MCF 10A (cell line): ENCODE measurements at regions of chr9 and their contacts with region 1.

Region 1: GRCh38 chr9:133103183-133103986 is 17.7 kb downstream of the RALGDS start:
- DNase-seq: peak; percentile 58
- H3K4me3 Mint-ChIP-seq: no peak overlapping the region
- H3K27ac Mint-ChIP-seq: peak overlapping the region; percentile 75
- H3K4me1 Mint-ChIP-seq: no peaks in the 10 kb centered on the region
- H3K27me3 Mint-ChIP-seq: no peaks in the 10 kb centered on the region
- CTCF ChIP-seq: peak; percentile 95

Region 2: GRCh38 chr9:132997591-132997990 is 105.8 kb before region 1 on chr9:
- CTCF ChIA-PET with region 1: no interaction called
- POLR2A ChIA-PET with region 1: no interaction called
- intact Hi-C with region 1: no loop called
- DNase-seq: no peak
- H3K4me3 Mint-ChIP-seq: no peak overlapping the region
- H3K27ac Mint-ChIP-seq: no peak overlapping the region
- H3K4me1 Mint-ChIP-seq: peaks cover 14% of the 10 kb centered on the region
- H3K27me3 Mint-ChIP-seq: peaks cover 16% of the 10 kb centered on the region
- CTCF ChIP-seq: no peak

Region 3: GRCh38 chr9:133067821-133068220 is 35.6 kb before region 1 on chr9:
- CTCF ChIA-PET with region 1: no interaction called
- POLR2A ChIA-PET with region 1: no interaction called
- intact Hi-C with region 1: no loop called
- DNase-seq: peak; percentile 71
- H3K4me3 Mint-ChIP-seq: no peak overlapping the region
- H3K27ac Mint-ChIP-seq: peak overlapping the region; percentile 61
- H3K4me1 Mint-ChIP-seq: no peaks in the 10 kb centered on the region
- H3K27me3 Mint-ChIP-seq: no peaks in the 10 kb centered on the region
- CTCF ChIP-seq: no peak

Region 4: GRCh38 chr9:133121198-133121939 is 18.0 kb after region 1 on chr9 and contains the start of gene RALGDS:
- CTCF ChIA-PET with region 1: interaction called, 24 read pairs
- POLR2A ChIA-PET with region 1: interaction called, 3 read pairs
- intact Hi-C with region 1: no loop called
- DNase-seq: peak; percentile 88
- H3K4me3 Mint-ChIP-seq: peak within 1 kb of the TSS; percentile 66
- H3K27ac Mint-ChIP-seq: peak within 1 kb of the TSS; percentile 54
- H3K4me1 Mint-ChIP-seq: peaks cover 22% of the 10 kb centered on the region
- H3K27me3 Mint-ChIP-seq: no peaks in the 10 kb centered on the region
- CTCF ChIP-seq: no peak
- total RNA-seq, gene RALGDS: 14.2 and 15.4 TPM in 2 replicates